Testis (tissue), 5 donors: ENCODE measurements at regions of chr3 and their contacts with region 1.

Region 1: GRCh38 chr3:127690823-127691452 is 18.2 kb downstream of the ABTB1 start:
- DNase-seq: peak; percentile 82
- H3K4me3 ChIP-seq: no peak overlapping the region
- H3K27ac ChIP-seq: peak overlapping the region in 1 of 2 donors; percentile 53
- H3K4me1 ChIP-seq: peaks cover 7% of the 10 kb centered on the region
- H3K27me3 ChIP-seq: no peaks in the 10 kb centered on the region
- CTCF ChIP-seq: peak; percentile 47 to 61 (median 50)
- POLR2A ChIP-seq: no peak

Region 2: GRCh38 chr3:127750226-127751031 is 59.5 kb after region 1 on chr3:
- intact Hi-C with region 1: no loop called
- DNase-seq: no peak
- H3K4me3 ChIP-seq: no peak overlapping the region
- H3K27ac ChIP-seq: no peak overlapping the region
- H3K4me1 ChIP-seq: peaks cover 15% of the 10 kb centered on the region
- H3K27me3 ChIP-seq: no peaks in the 10 kb centered on the region
- CTCF ChIP-seq: no peak
- POLR2A ChIP-seq: no peak

Region 3: DNA sequence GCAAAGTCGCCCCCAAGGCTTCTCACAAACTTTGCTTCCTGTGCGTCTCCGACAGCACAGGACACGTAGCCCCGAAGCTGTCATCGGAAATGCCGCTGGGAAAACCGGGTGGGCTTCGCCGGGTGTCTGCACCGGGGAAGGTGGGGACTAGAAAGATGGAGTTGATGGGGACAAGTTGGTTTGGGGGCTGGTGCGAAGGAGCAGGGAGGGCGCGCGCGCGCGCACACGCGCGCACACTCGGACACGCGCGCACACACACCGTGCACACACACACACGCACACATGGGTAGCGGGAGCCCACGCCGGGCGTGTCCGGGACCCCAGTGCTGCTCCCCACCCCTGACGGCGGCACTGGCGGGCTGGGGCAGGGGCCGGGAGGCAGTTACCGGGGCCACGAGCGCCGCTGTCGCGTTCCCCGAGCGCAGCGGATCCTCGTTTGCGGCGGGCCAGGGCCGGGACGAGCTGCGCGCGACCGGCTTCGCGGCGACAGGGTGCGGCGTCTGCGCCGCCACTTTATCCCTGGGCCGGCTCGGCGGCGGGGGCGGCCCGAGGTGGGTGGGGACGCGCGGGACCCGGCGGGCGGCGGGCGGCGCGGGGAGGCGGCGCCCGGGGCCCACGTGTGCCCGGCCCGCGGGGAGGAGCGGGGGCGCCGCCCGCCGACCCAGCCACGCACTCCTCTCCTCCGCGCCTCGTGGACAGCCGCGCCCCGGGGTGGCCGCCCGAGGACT is 131.9 kb after region 1 on chr3:
- intact Hi-C with region 1: loop called (anchors 5 kb)
- DNase-seq: peak; percentile 53
- H3K4me3 ChIP-seq: peak overlapping the region; percentile 79 to 81
- H3K27ac ChIP-seq: peak overlapping the region; percentile 60 to 86
- H3K4me1 ChIP-seq: peaks cover 9% of the 10 kb centered on the region
- H3K27me3 ChIP-seq: no peaks in the 10 kb centered on the region
- CTCF ChIP-seq: peak in 1 of 3 experiments; percentile 48
- POLR2A ChIP-seq: no peak

Region 4: GRCh38 chr3:127911421-127911931 is 220.5 kb after region 1 on chr3:
- intact Hi-C with region 1: loop called (anchors 5 kb)
- DNase-seq: no peak
- H3K4me3 ChIP-seq: no peak overlapping the region
- H3K27ac ChIP-seq: peak overlapping the region; percentile 53 to 80
- H3K4me1 ChIP-seq: peaks cover 9% of the 10 kb centered on the region
- H3K27me3 ChIP-seq: no peaks in the 10 kb centered on the region
- CTCF ChIP-seq: no peak
- POLR2A ChIP-seq: no peak